Aorta (tissue), 5 donors: ENCODE measurements at regions of chr11 and their contacts with region 1.

Region 1: GRCh38 chr11:6377902-6378639 is 12.2 kb upstream of the SMPD1 start:
- DNase-seq: no peak
- ATAC-seq: peak; percentile 41
- H3K4me3 ChIP-seq: no peak overlapping the region
- H3K27ac ChIP-seq: no peak overlapping the region
- H3K4me1 ChIP-seq: no peaks in the 10 kb centered on the region
- H3K27me3 ChIP-seq: no peaks in the 10 kb centered on the region

Region 2: GRCh38 chr11:6505577-6506240 is 127.6 kb after region 1 on chr11:
- intact Hi-C with region 1: loop called (anchors 2 kb)
- DNase-seq: no peak
- ATAC-seq: no peak
- H3K4me3 ChIP-seq: no peak overlapping the region
- H3K27ac ChIP-seq: no peak overlapping the region
- H3K4me1 ChIP-seq: no peaks in the 10 kb centered on the region
- H3K27me3 ChIP-seq: no peaks in the 10 kb centered on the region

Region 3: GRCh38 chr11:6705905-6706535 is 327.9 kb after region 1 on chr11:
- intact Hi-C with region 1: loop called in 1 of 2 experiments (anchors 5 kb)
- DNase-seq: no peak
- ATAC-seq: peak; percentile 84
- H3K4me3 ChIP-seq: no peak overlapping the region
- H3K27ac ChIP-seq: no peak overlapping the region
- H3K4me1 ChIP-seq: no peaks in the 10 kb centered on the region
- H3K27me3 ChIP-seq: no peaks in the 10 kb centered on the region